ENCODE measurements at regions of chr17 and their contacts with region 1.

Region 1: DNA sequence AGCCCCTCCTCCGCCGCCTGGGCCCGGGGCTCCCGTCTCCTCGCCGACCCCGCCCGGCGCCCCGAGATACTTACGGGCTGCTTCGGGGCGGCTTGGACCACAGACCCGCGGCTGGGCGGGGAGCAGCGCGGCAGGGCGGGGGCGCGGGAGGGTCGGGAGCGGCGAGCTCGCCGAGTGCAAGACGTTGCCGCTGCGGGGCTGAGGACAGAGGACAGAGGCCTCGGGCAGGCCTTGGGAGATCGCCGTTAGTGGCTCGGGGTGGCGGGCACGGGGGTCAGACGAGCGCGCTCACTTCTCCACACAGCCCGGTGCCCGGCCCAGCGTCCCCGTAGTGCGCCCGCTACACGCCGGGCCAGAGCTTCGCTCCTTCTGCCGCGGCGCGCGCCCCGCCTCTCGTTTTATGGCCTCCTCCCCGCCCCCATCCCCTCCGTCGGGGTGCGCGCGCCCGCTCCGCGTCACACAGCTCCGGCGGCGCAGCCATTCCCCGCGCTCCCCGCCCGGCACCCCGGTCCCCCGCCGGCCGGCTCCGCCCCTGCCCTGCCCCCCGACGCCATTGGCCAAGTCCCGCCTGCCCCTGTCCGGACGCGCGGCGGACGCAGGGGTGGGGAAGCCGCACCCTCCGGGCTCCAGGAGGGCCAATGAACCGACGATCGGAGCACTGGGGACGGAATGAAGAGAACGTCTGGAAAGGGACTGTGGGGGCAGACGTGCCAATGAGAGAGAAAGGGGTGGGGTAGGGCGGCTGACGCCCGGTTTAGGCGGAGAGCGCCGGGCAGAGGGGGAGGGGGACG is at the start of gene TOB1:
- DNase-seq: peak; percentile 92 to 96 (median 95)
- H3K4me3 ChIP-seq: peak within 1 kb of the TSS; percentile 89 to 97 (median 96)
- H3K4me3 Mint-ChIP-seq: peak within 1 kb of the TSS; percentile 97 to 99
- H3K27ac ChIP-seq: peak within 1 kb of the TSS; percentile 94 to 100
- H3K27ac Mint-ChIP-seq: peak within 1 kb of the TSS; percentile 99 to 100 (median 100)
- H3K4me1 ChIP-seq: peaks cover 23 to 51% of the 10 kb centered on the region in 2 donors
- H3K4me1 Mint-ChIP-seq: peaks cover 41% of the 10 kb centered on the region
- H3K27me3 ChIP-seq: no peaks in the 10 kb centered on the region
- H3K27me3 Mint-ChIP-seq: peaks cover 0 to 2% (median 2%) of the 10 kb centered on the region in 3 donors
- CTCF ChIP-seq: no peak
- polyA plus RNA-seq, gene TOB1: 18.5 to 107 (median 41.0) TPM

Region 2: DNA sequence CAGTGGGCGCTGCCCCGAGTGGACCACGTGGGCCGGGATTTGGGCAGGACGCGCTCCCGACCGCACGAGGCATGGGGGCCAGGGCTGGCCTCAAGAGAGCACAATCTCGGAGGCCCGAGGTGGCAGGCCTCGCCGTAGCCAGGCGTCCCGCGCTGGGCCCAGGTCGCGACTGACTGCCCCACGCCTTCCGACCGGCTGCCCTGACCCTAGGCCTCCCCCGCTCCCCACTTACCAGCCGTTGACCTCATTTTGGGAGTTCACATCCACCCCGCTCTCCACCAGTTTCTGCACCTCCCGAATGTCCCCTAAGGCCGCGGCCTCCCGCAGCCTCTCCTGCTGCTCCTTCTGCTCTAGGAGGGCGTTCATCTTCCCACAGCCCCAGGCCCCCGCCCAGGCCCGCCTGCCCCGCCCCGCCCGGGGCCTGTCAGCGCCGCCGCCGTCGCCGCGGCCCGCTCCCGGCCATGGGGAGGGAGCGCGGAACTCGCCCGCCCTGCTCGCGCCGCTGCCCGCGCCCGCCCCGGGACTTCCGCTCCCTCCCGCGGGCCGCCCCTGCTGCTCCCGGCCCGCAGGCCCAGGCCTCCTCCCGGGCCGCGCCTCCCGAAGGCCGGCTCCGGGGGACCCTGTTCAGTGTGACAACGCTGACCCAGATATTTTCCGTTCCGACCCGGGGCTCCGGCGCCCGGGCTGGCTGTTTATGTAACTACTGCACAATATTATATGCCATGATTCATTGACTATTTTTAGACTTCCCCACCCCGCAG is 158.7 kb before region 1 on chr17 and contains the start of gene ANKRD40:
- intact Hi-C with region 1: loop called in 1 of 2 experiments (anchors 10 kb)
- DNase-seq: peak; percentile 90 to 94 (median 90)
- H3K4me3 ChIP-seq: peak within 1 kb of the TSS; percentile 59 to 85 (median 70)
- H3K4me3 Mint-ChIP-seq: peak within 1 kb of the TSS; percentile 96 to 97
- H3K27ac ChIP-seq: peak within 1 kb of the TSS; percentile 82 to 96
- H3K27ac Mint-ChIP-seq: peak within 1 kb of the TSS; percentile 96 to 98 (median 98)
- H3K4me1 ChIP-seq: peaks cover 29 to 40% of the 10 kb centered on the region in 2 donors
- H3K4me1 Mint-ChIP-seq: peaks cover 38% of the 10 kb centered on the region
- H3K27me3 ChIP-seq: no peaks in the 10 kb centered on the region
- H3K27me3 Mint-ChIP-seq: no peaks in the 10 kb centered on the region
- CTCF ChIP-seq: no peak
- polyA plus RNA-seq, gene ANKRD40: 3.4 to 21.8 (median 3.4) TPM

Region 3: DNA sequence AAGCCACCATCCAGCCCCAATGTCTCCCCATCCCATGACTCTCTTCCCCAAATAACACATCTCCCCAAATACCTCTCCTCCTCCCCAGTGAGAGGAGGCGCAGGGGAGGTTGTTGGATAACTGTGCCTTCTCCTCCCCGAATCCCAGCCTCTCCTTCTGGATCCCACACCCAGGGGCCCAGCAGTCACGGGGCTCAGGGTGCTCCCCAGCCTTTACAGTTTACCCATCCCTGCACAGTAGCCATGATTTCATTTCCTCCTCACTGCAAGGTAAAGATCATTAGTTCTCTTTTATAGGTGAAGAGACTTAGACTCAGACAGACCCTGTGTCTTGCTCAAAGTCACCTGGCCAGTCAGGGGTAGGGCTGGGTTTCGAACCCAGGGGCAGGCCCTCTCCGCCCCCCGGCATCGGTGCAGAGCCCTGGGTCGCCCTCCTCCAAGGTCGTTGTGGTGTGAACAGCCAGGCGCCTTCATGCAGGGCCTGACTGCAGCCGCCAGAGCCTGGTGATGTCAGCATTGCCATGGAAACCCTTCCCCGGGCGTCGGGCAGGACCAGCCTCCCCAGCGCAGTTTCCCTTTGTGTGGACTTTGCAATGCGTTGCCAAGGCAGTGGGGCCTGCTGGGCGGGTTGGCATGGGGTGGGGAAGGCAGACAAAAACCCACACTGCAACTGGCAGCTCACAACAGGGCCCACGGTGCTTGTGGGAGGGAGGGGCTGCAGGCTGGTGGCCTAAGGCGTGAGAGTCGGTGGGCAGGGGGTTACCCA is 53.3 kb after region 1 on chr17:
- intact Hi-C with region 1: loop called in 1 of 2 experiments (anchors 10 kb)
- DNase-seq: peak; percentile 91 to 94 (median 92)
- H3K4me3 ChIP-seq: peak overlapping the region in 1 of 3 experiments; percentile 21
- H3K4me3 Mint-ChIP-seq: peak overlapping the region; percentile 39 to 52
- H3K27ac ChIP-seq: peak overlapping the region; percentile 74 to 75
- H3K27ac Mint-ChIP-seq: peak overlapping the region; percentile 96 to 99 (median 98)
- H3K4me1 ChIP-seq: peaks cover 45 to 51% of the 10 kb centered on the region in 2 donors
- H3K4me1 Mint-ChIP-seq: peaks cover 58% of the 10 kb centered on the region
- H3K27me3 ChIP-seq: no peaks in the 10 kb centered on the region
- H3K27me3 Mint-ChIP-seq: peaks cover 0 to 2% (median 0%) of the 10 kb centered on the region in 3 donors
- CTCF ChIP-seq: no peak

Region 4: GRCh38 chr17:50949989-50950881 is 84.1 kb after region 1 on chr17:
- intact Hi-C with region 1: loop called in 1 of 2 experiments (anchors 2 kb)
- DNase-seq: peak; percentile 85 to 92 (median 88)
- H3K4me3 ChIP-seq: peak overlapping the region in 2 of 3 experiments; percentile 11 to 57
- H3K4me3 Mint-ChIP-seq: peak overlapping the region; percentile 63 to 80
- H3K27ac ChIP-seq: peak overlapping the region; percentile 92 to 95
- H3K27ac Mint-ChIP-seq: peak overlapping the region; percentile 93 to 98 (median 96)
- H3K4me1 ChIP-seq: peaks cover 49 to 59% of the 10 kb centered on the region in 2 donors
- H3K4me1 Mint-ChIP-seq: peaks cover 57% of the 10 kb centered on the region
- H3K27me3 ChIP-seq: no peaks in the 10 kb centered on the region
- H3K27me3 Mint-ChIP-seq: peaks cover 4 to 12% (median 6%) of the 10 kb centered on the region in 3 donors
- CTCF ChIP-seq: peak; percentile 95

Region 5: DNA sequence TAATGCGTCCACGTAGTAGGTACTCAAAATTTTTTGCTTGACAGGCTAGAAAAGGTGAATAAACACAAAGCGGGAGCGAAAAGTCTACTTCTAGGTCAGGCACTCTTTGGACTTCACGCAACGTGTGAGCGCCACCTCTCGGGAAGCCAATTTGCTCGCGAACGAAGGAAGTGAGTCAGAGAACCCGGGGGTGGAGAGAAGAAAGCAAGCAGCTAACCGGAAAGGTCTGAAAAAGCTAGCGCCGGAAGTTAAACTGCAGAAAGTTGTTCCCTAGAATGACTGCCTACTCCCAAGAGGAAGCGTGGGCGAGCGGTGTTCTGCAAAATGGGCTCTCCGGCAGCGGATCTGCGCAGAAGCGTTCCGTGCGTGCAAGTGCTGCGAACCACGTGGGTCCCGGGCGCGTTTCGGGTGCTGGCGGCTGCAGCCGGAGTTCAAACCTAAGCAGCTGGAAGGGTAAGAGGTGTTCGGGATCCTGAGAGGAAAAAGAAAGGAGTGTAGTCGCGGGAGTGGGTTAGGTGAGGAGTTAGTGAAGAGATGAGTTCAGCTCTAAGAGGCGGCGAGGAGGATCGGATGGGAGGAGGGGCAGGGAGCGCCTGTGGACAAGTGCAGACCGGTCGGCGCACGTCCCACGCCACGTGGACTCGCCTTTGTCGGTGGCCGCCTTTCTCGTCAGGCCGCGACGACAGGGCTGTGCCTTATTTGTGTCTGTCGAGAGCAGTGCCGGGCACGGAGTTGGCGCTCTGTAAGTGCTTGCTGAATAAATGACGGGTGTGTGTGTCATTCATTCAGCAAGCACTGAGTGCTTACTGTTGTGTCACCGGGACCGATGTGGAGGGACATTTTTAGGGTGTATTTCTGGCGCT is 287.3 kb after region 1 on chr17 and contains the start of gene NME1:
- intact Hi-C with region 1: loop called in 1 of 2 experiments (anchors 10 kb)
- DNase-seq: peak; percentile 97 to 99 (median 99)
- H3K4me3 ChIP-seq: peak within 1 kb of the TSS; percentile 68 to 86 (median 80)
- H3K4me3 Mint-ChIP-seq: no peak within 1 kb of the TSS
- H3K27ac ChIP-seq: peak within 1 kb of the TSS; percentile 55 to 87
- H3K27ac Mint-ChIP-seq: no peak within 1 kb of the TSS
- H3K4me1 ChIP-seq: peaks cover 18 to 19% of the 10 kb centered on the region in 2 donors
- H3K4me1 Mint-ChIP-seq: no peaks in the 10 kb centered on the region
- H3K27me3 ChIP-seq: no peaks in the 10 kb centered on the region
- H3K27me3 Mint-ChIP-seq: peaks cover 0 to 2% (median 0%) of the 10 kb centered on the region in 3 donors
- CTCF ChIP-seq: peak; percentile 76
- polyA plus RNA-seq, gene NME1: 14.8 to 51.4 (median 20.8) TPM

Measured in CD14-positive monocyte (primary cell).